HEK293T (cell line): ENCODE measurements at regions of chr15 and their contacts with region 1.

Region 1: GRCh38 chr15:32029862-32030781 is at the start of gene CHRNA7:
- DNase-seq: peak; percentile 73

Region 2: GRCh38 chr15:31852933-31853799 is 177.0 kb before region 1 on chr15:
- CTCF ChIA-PET with region 1: no interaction called
- POLR2A ChIA-PET with region 1: no interaction called
- DNase-seq: no peak

Region 3: GRCh38 chr15:31977812-31978661 is 52.1 kb before region 1 on chr15:
- CTCF ChIA-PET with region 1: interaction called, 11 read pairs
- POLR2A ChIA-PET with region 1: interaction called, 6 read pairs
- DNase-seq: peak; percentile 67

Region 4: GRCh38 chr15:32060706-32061105 is 30.6 kb after region 1 on chr15:
- CTCF ChIA-PET with region 1: no interaction called
- POLR2A ChIA-PET with region 1: no interaction called
- DNase-seq: no peak